CD8-positive, alpha-beta memory T cell (primary cell): ENCODE measurements at regions of chr12 and their contacts with region 1.

Region 1: DNA sequence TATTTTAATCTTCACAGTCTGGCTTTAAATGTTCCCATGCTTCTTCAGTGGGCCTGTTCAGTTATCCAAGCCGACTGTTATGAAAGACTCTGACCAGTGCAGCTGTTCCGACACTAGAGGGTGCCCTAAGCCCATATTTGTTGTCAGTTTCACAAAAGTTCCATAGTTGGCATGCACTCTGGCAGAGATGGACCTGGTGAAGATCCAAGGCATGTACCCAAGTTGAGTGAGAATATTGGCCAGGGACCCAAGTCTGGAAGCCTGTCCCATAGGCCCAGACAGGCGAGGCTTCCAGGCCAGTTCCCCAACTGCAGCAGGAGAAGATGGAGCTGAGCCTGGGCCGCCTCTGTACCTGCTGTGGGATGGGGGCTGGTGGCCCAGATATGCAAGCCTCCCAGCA is 27.4 kb upstream of the GUCY2C start:
- DNase-seq: peak; percentile 26 to 69 (median 55)
- H3K4me3 ChIP-seq: no peak overlapping the region
- H3K4me3 Mint-ChIP-seq: no peak overlapping the region
- H3K27ac ChIP-seq: no peak overlapping the region
- H3K27ac Mint-ChIP-seq: peak overlapping the region in 1 of 8 donors; percentile 77
- H3K4me1 ChIP-seq: no peaks in the 10 kb centered on the region
- H3K4me1 Mint-ChIP-seq: no peaks in the 10 kb centered on the region
- H3K27me3 ChIP-seq: no peaks in the 10 kb centered on the region
- H3K27me3 Mint-ChIP-seq: peaks cover 4 to 22% of the 10 kb centered on the region in 2 donors

Region 2: GRCh38 chr12:14741153-14741552 is 17.4 kb after region 1 on chr12:
- CTCF ChIA-PET with region 1: interaction called, 10 read pairs
- POLR2A ChIA-PET with region 1: no interaction called
- DNase-seq: no peak
- H3K4me3 ChIP-seq: no peak overlapping the region
- H3K4me3 Mint-ChIP-seq: no peak overlapping the region
- H3K27ac ChIP-seq: no peak overlapping the region
- H3K27ac Mint-ChIP-seq: peak overlapping the region in 1 of 8 donors; percentile 82
- H3K4me1 ChIP-seq: no peaks in the 10 kb centered on the region
- H3K4me1 Mint-ChIP-seq: peaks cover 0 to 5% (median 4%) of the 10 kb centered on the region in 3 donors
- H3K27me3 ChIP-seq: no peaks in the 10 kb centered on the region
- H3K27me3 Mint-ChIP-seq: no peaks in the 10 kb centered on the region